Naive thymus-derived CD8-positive, alpha-beta T cell (primary cell): ENCODE measurements at regions of chr1 and their contacts with region 1.

Region 1: DNA sequence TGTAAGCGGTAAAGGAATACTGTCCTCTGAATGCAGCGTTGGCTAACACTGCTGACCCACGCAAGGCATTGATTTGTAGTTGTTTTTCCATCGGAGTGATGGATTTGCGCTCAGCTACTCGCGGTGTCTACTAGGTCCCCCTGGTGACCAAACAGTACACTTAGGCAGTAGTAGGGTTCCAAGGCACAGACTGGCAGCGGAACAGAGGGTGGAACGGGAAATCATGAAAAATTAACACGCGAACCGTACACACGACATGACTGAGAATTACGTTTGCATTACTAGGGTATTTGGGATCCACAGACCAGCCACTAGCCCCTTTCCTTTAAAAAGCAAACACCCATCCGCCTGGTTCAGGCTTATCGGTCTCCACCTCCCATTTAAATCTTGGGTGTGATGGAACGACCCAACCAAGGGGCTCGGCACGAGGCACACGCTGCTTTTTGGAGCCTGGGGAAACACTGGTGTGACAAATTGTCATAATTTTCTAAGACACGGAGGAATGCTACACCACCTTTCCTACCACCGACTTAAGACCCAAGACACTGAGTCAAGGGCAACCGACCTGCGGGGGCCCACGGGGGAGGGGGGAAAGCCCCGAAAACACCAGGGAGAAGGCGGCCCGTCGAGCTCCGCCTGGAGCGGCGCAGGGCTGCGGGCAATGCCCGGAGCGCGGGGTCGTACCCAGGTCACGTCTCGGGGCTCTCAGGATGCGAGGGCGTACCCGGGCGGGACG is 699 bp downstream of the DIPK1A start:
- DNase-seq: peak; percentile 16 to 82 (median 68)
- ATAC-seq: peak; percentile 41 to 54
- H3K4me3 Mint-ChIP-seq: peak overlapping the region in 9 of 10 donors; percentile 89 to 96 (median 94)
- H3K27ac Mint-ChIP-seq: peak overlapping the region; percentile 95 to 99 (median 98)
- H3K4me1 Mint-ChIP-seq: peaks cover 21 to 44% (median 43%) of the 10 kb centered on the region in 4 donors
- H3K27me3 Mint-ChIP-seq: no peaks in the 10 kb centered on the region

Region 2: GRCh38 chr1:92804721-92805169 is 155.8 kb before region 1 on chr1:
- POLR2A ChIA-PET with region 1: no interaction called
- DNase-seq: peak in 1 of 10 donors; percentile 12
- ATAC-seq: peak; percentile 57 to 65
- H3K4me3 Mint-ChIP-seq: peak overlapping the region in 1 of 10 donors; percentile 2
- H3K27ac Mint-ChIP-seq: peak overlapping the region in 1 of 10 donors; percentile 59
- H3K4me1 Mint-ChIP-seq: peaks cover 0 to 11% (median 4%) of the 10 kb centered on the region in 4 donors
- H3K27me3 Mint-ChIP-seq: peaks cover 0 to 6% (median 3%) of the 10 kb centered on the region in 5 donors

Region 3: GRCh38 chr1:92858564-92859399 is 101.8 kb before region 1 on chr1:
- POLR2A ChIA-PET with region 1: interaction called, 56 read pairs
- DNase-seq: peak in 9 of 10 donors; percentile 33 to 84 (median 62)
- ATAC-seq: peak; percentile 90 to 92
- H3K4me3 Mint-ChIP-seq: peak overlapping the region; percentile 49 to 77 (median 62)
- H3K27ac Mint-ChIP-seq: peak overlapping the region; percentile 3 to 93 (median 56)
- H3K4me1 Mint-ChIP-seq: peaks cover 3 to 20% (median 15%) of the 10 kb centered on the region in 4 donors
- H3K27me3 Mint-ChIP-seq: no peaks in the 10 kb centered on the region

Region 4: GRCh38 chr1:92882819-92883218 is 77.7 kb before region 1 on chr1:
- POLR2A ChIA-PET with region 1: interaction called, 11 read pairs
- DNase-seq: peak in 7 of 10 donors; percentile 9 to 47 (median 34)
- ATAC-seq: peak; percentile 93 to 98
- H3K4me3 Mint-ChIP-seq: peak overlapping the region in 9 of 10 donors; percentile 12 to 62 (median 33)
- H3K27ac Mint-ChIP-seq: peak overlapping the region; percentile 73 to 95 (median 88)
- H3K4me1 Mint-ChIP-seq: peaks cover 14 to 54% (median 33%) of the 10 kb centered on the region in 4 donors
- H3K27me3 Mint-ChIP-seq: no peaks in the 10 kb centered on the region

Region 5: GRCh38 chr1:92975551-92976232 is 15.1 kb after region 1 on chr1:
- POLR2A ChIA-PET with region 1: interaction called, 38 read pairs
- DNase-seq: peak in 1 of 10 donors; percentile 30
- ATAC-seq: peak in 1 of 2 donors; percentile 41
- H3K4me3 Mint-ChIP-seq: no peak overlapping the region
- H3K27ac Mint-ChIP-seq: peak overlapping the region in 7 of 10 donors; percentile 5 to 73 (median 29)
- H3K4me1 Mint-ChIP-seq: peaks cover 13 to 68% (median 27%) of the 10 kb centered on the region in 4 donors
- H3K27me3 Mint-ChIP-seq: no peaks in the 10 kb centered on the region

Region 6: GRCh38 chr1:92994105-92994712 is 33.6 kb after region 1 on chr1:
- POLR2A ChIA-PET with region 1: interaction called, 92 read pairs
- DNase-seq: peak; percentile 41 to 90 (median 76)
- ATAC-seq: peak; percentile 88 to 95
- H3K4me3 Mint-ChIP-seq: no peak overlapping the region
- H3K27ac Mint-ChIP-seq: peak overlapping the region in 9 of 10 donors; percentile 9 to 90 (median 79)
- H3K4me1 Mint-ChIP-seq: peaks cover 19 to 49% (median 46%) of the 10 kb centered on the region in 4 donors
- H3K27me3 Mint-ChIP-seq: no peaks in the 10 kb centered on the region

Region 7: GRCh38 chr1:93846211-93846991 is 885.8 kb after region 1 on chr1:
- POLR2A ChIA-PET with region 1: interaction called, 17 read pairs
- DNase-seq: peak; percentile 80 to 92 (median 86)
- ATAC-seq: peak; percentile 55 to 59
- H3K4me3 Mint-ChIP-seq: peak overlapping the region; percentile 83 to 99 (median 92)
- H3K27ac Mint-ChIP-seq: peak overlapping the region; percentile 92 to 100 (median 96)
- H3K4me1 Mint-ChIP-seq: peaks cover 15 to 42% (median 35%) of the 10 kb centered on the region in 4 donors
- H3K27me3 Mint-ChIP-seq: peaks cover 0 to 6% (median 0%) of the 10 kb centered on the region in 5 donors